ENCODE measurements at regions of chr22 and their contacts with region 1.

Region 1: GRCh38 chr22:46737976-46738646 is at the start of gene CERK:
- DNase-seq: peak; percentile 73
- H3K4me3 Mint-ChIP-seq: peak within 1 kb of the TSS; percentile 99
- H3K27ac Mint-ChIP-seq: peak within 1 kb of the TSS; percentile 100
- H3K4me1 Mint-ChIP-seq: peaks cover 42% of the 10 kb centered on the region
- H3K27me3 Mint-ChIP-seq: no peaks in the 10 kb centered on the region
- total RNA-seq, gene CERK: 68.7 to 73.4 TPM

Region 2: DNA sequence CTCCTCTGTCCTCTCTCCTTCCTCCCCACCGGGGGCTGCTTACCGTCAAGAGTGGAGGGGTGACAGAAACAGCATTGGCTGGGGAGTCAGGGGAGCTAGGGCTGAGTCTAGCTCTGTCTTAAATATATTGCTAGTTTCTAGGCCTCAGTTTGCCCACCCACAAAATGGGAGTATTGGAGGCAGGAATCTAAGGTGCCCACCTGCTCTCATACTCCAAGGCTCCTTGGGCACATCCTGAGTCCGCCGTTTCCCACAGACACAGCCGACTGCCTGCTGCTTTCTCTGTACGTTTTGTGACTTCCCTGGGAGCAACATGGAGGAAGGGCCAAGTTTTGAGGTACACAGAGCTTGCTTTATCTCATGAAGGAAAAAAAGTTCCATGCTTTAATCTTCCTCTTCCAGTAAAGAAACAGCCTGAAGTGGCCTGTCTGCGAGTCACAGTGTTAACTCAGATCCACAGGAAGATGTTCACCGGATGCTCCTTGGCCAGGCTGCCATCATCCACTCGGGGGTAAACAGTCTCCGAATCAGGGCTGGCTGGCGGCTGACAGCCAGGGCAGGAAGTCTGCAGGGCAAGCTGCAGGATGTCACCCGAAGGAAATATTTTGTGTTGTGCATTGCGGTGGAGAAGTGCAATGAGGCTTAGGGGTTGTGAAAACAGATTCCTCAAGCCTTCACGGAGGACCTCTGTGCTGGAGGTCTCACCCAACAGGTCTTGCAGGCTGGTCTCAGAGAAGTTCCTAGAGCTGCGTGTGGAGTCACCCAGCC is 11.0 kb after region 1 on chr22:
- CTCF ChIA-PET with region 1: interaction called, 8 read pairs
- POLR2A ChIA-PET with region 1: interaction called, 21 read pairs
- DNase-seq: peak; percentile 68
- H3K4me3 Mint-ChIP-seq: peak overlapping the region; percentile 62
- H3K27ac Mint-ChIP-seq: peak overlapping the region; percentile 91
- H3K4me1 Mint-ChIP-seq: peaks cover 22% of the 10 kb centered on the region
- H3K27me3 Mint-ChIP-seq: no peaks in the 10 kb centered on the region

Region 3: DNA sequence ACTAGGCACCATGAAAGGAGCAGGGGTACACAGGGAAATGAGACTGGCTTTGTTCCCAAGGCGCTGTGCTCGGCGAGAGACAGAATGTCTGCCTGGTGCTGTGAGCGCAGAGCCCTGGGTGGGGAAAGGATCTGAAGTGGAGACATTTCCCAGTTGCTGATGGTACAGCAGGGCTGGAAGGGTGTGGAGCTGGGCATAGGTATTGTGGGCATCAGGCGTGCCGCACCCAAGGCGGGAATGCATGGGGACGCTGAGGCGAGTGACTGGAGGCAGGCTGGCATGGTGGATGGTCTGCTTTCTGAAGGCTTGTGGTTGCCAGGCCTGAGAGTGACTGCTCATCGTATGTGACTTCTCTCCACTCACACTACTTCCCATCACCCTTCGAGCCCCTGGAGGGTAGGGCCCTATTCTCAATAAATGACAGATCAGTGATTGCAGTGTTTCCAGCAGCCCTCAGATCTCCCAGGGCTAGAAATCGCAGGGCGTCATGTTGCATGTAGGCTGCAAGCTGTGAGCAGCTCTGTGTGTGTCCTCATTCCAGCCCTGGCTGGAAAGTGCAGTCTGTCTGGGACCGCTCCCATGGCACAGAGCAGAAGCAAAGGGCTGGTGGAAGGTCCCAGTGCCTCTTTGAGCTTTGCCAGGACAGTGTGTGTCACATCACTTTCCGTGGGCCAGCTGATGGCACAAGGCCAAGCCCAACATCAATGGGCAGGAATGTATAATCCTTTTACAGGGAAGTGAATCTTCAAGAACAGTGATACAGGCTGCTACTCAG is 92.0 kb after region 1 on chr22:
- CTCF ChIA-PET with region 1: no interaction called
- POLR2A ChIA-PET with region 1: no interaction called
- DNase-seq: no peak
- H3K4me3 Mint-ChIP-seq: no peak overlapping the region
- H3K27ac Mint-ChIP-seq: no peak overlapping the region
- H3K4me1 Mint-ChIP-seq: peaks cover 2% of the 10 kb centered on the region
- H3K27me3 Mint-ChIP-seq: no peaks in the 10 kb centered on the region